ENCODE measurements at regions of chr11 and their contacts with region 1.

Region 1: DNA sequence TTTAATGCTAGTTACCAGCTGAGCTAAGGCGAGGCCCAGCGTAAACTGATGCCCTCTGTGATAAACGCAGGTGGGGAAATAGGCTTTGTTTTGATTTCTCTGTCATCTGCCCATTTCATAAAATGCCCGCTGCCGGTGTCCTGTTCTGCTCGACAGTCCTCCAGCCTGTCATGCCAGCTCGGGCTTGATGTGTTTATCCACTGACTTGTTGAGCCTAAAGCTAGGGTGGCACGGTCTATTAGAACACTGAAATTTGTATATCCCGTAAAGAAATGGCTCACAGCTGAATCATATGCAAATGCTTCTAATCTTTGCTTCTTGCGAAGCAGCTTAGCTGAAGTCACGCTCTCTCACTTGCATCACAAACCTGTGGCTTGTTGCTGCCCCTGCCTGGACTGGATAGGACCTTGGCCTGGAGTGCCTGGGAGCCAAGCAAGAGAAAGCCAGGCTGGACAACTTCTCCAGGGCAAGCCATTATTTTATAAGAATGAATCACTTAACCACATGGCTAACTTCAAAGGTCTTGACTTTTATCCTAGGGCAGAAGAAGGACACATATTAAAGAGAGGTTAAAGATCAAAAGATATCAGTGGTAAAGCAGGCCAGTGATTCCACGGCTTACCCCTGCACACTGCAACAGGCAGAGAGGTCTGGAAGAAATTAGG is 33.1 kb downstream of the EHF start:
- DNase-seq: peak; percentile 59
- H3K4me3 Mint-ChIP-seq: no peak overlapping the region
- H3K27ac Mint-ChIP-seq: no peak overlapping the region
- H3K4me1 Mint-ChIP-seq: peaks cover 43% of the 10 kb centered on the region
- H3K27me3 Mint-ChIP-seq: peaks cover 31% of the 10 kb centered on the region

Region 2: DNA sequence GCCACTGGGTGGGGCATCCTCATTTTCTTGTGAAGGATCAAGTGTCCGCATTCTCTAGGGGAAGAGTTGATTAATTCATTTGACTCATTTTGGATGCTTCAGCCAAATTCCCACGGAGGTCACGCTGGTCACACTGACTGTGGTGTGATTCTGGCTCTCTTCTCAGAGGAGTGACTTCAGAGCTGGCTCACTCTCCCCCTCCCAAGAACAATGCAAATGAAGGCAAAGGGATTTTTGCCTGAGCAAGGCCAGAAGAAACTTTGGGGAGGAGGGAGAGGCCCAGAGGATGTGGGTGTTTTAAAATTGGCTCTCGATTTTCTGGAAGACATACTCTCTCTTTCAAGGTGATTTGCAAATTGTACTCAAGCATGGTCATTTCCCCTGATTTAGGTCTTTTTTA is 711.0 kb before region 1 on chr11:
- CTCF ChIA-PET with region 1: no interaction called
- intact Hi-C with region 1: no loop called
- DNase-seq: peak; percentile 34
- H3K4me3 Mint-ChIP-seq: no peak overlapping the region
- H3K27ac Mint-ChIP-seq: no peak overlapping the region
- H3K4me1 Mint-ChIP-seq: no peaks in the 10 kb centered on the region
- H3K27me3 Mint-ChIP-seq: no peaks in the 10 kb centered on the region

Region 3: GRCh38 chr11:34373727-34374126 is 280.2 kb before region 1 on chr11:
- CTCF ChIA-PET with region 1: no interaction called
- intact Hi-C with region 1: loop called (anchors 5 kb)
- DNase-seq: no peak
- H3K4me3 Mint-ChIP-seq: no peak overlapping the region
- H3K27ac Mint-ChIP-seq: no peak overlapping the region
- H3K4me1 Mint-ChIP-seq: peaks cover 12% of the 10 kb centered on the region
- H3K27me3 Mint-ChIP-seq: no peaks in the 10 kb centered on the region

Region 4: DNA sequence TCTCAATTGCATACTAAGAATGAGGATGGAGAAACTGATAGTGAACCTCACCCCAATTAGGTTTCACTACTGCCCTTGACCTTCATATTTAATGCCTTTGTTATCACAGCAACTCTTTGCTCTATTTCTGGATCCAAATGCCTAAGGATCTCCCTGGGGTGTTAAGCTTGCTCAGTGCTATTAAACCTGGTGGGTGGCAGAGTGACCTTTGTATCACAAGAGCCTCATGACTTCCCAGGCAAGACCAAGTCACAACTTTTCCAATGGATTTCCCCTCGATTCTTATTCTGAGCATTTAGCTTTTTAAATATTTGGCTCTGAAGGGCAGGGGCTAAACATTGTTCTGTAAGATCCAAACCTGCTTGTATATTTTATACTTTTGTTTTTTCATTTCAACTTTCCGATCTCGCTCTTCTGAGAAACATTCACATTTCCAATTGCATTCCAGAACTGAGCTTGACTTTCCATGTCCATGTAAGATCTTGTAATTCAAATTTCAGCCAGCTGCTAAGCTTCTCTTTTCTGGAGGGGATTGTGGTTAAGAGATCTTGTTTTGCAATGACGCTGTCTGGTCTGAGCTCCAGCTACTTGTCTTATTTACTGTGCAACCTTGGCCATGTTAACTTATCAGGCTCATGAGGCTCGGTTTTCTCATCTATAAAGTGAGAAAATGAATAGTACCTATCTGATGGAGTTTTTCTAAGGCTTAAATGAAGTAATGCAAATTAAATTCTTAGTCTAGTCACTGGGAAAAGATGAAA is 39.4 kb before region 1 on chr11:
- CTCF ChIA-PET with region 1: no interaction called
- intact Hi-C with region 1: loop called (anchors 5 kb)
- DNase-seq: no peak
- H3K4me3 Mint-ChIP-seq: no peak overlapping the region
- H3K27ac Mint-ChIP-seq: no peak overlapping the region
- H3K4me1 Mint-ChIP-seq: peaks cover 15% of the 10 kb centered on the region
- H3K27me3 Mint-ChIP-seq: peaks cover 7% of the 10 kb centered on the region

Region 5: GRCh38 chr11:35040221-35040942 is 386.4 kb after region 1 on chr11:
- CTCF ChIA-PET with region 1: no interaction called
- intact Hi-C with region 1: loop called (anchors 5 kb)
- DNase-seq: peak; percentile 83
- H3K4me3 Mint-ChIP-seq: peak overlapping the region; percentile 76
- H3K27ac Mint-ChIP-seq: peak overlapping the region; percentile 94
- H3K4me1 Mint-ChIP-seq: peaks cover 60% of the 10 kb centered on the region
- H3K27me3 Mint-ChIP-seq: peaks cover 5% of the 10 kb centered on the region

Region 6: DNA sequence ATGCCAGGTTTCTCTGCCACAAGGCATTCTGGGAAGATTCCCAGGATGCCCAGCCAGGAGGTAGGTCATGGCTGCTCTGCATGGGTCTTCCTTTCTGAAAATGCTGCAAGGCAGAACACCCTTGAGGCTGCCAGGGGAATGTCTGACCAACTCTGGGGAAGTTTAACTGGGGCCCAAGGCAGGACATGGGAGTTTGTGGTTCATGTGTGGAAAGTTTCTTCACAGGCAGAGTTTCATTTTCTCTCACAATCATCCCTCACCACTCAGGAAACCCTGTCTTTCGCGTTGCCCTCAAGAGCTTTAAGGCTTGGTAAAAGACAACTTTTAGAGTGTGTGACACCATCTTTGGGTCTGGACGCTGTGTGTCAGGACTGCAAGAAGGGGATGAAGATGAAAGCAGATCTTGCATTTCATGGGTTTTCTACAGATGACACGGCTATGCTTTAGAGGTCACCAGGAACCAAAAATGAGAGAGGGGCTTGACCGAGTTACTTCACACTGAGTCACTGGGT is 618.5 kb after region 1 on chr11:
- CTCF ChIA-PET with region 1: no interaction called
- intact Hi-C with region 1: loop called (anchors 10 kb)
- DNase-seq: peak; percentile 70
- H3K4me3 Mint-ChIP-seq: peak overlapping the region; percentile 17
- H3K27ac Mint-ChIP-seq: peak overlapping the region; percentile 63
- H3K4me1 Mint-ChIP-seq: peaks cover 48% of the 10 kb centered on the region
- H3K27me3 Mint-ChIP-seq: no peaks in the 10 kb centered on the region

Region 7: DNA sequence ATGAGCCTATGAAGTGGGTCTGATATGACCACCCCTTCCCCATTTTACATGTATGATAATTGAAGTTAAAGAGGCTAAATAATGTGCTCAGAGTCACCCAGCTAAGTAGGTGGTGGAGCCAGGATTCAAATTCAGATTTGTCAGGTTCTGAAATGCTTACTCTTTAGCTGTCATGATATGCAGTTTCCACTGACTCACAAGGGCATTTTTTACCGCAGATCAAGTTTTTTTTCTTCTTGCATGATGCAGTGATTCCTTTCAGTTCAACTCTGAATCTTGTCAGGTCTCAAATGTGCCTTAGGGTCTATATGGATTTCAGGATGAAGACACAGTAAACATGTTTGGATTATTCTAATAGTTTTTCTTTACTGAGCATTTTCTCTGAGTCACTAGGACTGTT is 996.0 kb after region 1 on chr11:
- CTCF ChIA-PET with region 1: no interaction called
- intact Hi-C with region 1: loop called (anchors 10 kb)
- DNase-seq: peak; percentile 38
- H3K4me3 Mint-ChIP-seq: no peak overlapping the region
- H3K27ac Mint-ChIP-seq: no peak overlapping the region
- H3K4me1 Mint-ChIP-seq: peaks cover 8% of the 10 kb centered on the region
- H3K27me3 Mint-ChIP-seq: peaks cover 20% of the 10 kb centered on the region